Lower leg skin (tissue), 4 donors: ENCODE measurements at regions of chr20 and their contacts with region 1.

Region 1: DNA sequence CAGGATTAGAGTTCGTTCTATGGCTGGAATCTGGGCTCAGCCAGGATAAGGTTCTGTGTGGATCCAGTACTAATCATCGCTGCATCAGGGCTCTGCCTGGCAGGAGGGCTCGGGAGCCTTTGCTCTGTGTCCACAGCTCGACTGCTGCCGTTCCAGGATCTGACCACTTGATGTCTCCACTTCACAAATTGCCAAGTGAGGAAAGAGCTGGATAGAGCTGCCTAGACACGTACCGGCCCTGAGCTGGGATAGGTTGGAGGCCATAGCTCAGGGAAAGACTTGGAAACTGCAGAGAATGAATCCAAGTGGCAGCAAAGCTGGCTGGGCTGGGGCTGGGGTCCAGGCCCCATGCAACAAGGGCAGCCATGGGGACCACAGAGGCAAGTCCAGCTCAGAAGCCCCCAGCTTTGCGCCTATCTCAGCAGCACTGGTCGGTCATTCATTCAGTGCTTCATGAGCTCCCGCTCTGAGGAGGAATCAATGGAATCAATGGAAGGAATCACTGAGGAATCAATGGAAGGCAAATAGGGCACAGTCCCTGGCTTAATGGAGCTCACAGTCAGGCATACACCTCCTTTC is 38.0 kb upstream of the TOP1 start:
- DNase-seq: peak; percentile 82 to 93
- H3K4me3 ChIP-seq: no peak overlapping the region
- CTCF ChIP-seq: peak in 1 of 3 donors; percentile 76
- POLR2A ChIP-seq: no peak

Region 2: GRCh38 chr20:41094353-41095055 is 103.9 kb after region 1 on chr20:
- intact Hi-C with region 1: loop called (anchors 5 kb)
- DNase-seq: no peak
- H3K4me3 ChIP-seq: no peak overlapping the region
- CTCF ChIP-seq: no peak
- POLR2A ChIP-seq: no peak